Activated CD4-positive, alpha-beta memory T cell treated with anti-CD3 and anti-CD28 coated beads, Interleukin-2, amount 10 ng/mL, durations not matched to agents 7 days and 5 days (primary cell): ENCODE measurements at regions of chr22 and their contacts with region 1.

Region 1: GRCh38 chr22:17217179-17217578 is 2.1 kb downstream of the ADA2 start:
- DNase-seq: peak; percentile 30
- H3K4me3 Mint-ChIP-seq: peak overlapping the region; percentile 65
- H3K27ac Mint-ChIP-seq: peak overlapping the region; percentile 75
- H3K4me1 Mint-ChIP-seq: peaks cover 62% of the 10 kb centered on the region
- H3K27me3 Mint-ChIP-seq: peaks cover 2% of the 10 kb centered on the region

Region 2: DNA sequence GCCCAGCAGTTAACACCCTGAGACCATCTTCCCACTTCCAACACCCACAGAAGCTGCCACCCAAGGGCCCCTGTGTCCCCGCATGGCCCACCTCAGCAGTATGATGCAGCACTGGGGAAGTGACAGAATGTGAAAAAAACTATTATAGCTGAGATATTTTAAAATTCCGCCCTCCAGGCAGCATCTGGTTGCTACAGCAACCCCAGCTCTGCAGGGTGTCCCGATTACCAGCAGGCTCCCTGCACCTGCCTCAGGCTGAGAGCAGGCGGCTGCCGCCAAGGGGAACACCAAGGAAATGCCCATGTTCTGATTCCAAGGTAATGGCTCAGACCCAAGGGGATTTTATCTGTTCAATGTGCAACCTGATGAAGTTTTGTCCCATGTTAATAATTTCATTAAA is 85.5 kb before region 1 on chr22:
- CTCF ChIA-PET with region 1: no interaction called
- POLR2A ChIA-PET with region 1: no interaction called
- DNase-seq: no peak
- H3K4me3 Mint-ChIP-seq: no peak overlapping the region
- H3K27ac Mint-ChIP-seq: no peak overlapping the region
- H3K4me1 Mint-ChIP-seq: no peaks in the 10 kb centered on the region
- H3K27me3 Mint-ChIP-seq: no peaks in the 10 kb centered on the region

Region 3: DNA sequence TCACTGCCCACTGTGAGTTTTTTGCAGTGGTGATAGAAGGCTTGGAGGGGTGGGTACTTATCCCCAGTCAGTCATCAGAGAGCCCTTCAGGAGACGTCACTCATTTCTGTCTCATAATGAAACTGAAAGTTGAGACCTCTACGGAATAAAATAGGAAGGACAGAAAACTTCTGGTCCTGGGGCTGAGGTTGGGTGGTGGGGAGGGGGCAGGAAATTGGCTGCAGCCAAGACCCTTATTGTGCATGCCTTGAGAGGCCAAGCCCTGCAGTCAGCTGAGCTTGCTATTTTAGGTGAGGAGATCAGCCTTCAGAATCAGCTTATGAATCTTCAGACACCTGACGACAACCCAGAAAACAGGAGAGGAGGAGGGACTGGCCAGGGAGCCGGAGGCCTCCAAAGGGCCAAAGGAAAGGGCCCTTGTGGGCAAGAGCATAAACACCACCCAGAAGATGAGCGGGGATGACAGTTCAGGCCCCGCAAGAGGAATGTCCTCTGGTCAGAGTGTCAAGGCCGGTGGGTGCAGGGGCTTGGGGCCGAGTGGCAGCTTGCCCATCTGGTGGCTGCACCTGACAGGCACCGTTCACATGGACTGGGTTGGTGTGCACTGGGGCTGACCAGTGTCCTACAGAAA is 20.0 kb after region 1 on chr22:
- CTCF ChIA-PET with region 1: interaction called, 7 read pairs
- POLR2A ChIA-PET with region 1: interaction called, 15 read pairs
- DNase-seq: peak; percentile 51
- H3K4me3 Mint-ChIP-seq: peak overlapping the region; percentile 70
- H3K27ac Mint-ChIP-seq: peak overlapping the region; percentile 77
- H3K4me1 Mint-ChIP-seq: peaks cover 18% of the 10 kb centered on the region
- H3K27me3 Mint-ChIP-seq: no peaks in the 10 kb centered on the region

Region 4: GRCh38 chr22:17258015-17258787 is 41.0 kb after region 1 on chr22:
- CTCF ChIA-PET with region 1: interaction called, 4 read pairs
- POLR2A ChIA-PET with region 1: interaction called, 12 read pairs
- DNase-seq: peak; percentile 79
- H3K4me3 Mint-ChIP-seq: peak overlapping the region; percentile 24
- H3K27ac Mint-ChIP-seq: peak overlapping the region; percentile 78
- H3K4me1 Mint-ChIP-seq: peaks cover 31% of the 10 kb centered on the region
- H3K27me3 Mint-ChIP-seq: no peaks in the 10 kb centered on the region

Region 5: GRCh38 chr22:17314487-17314886 is 97.3 kb after region 1 on chr22:
- CTCF ChIA-PET with region 1: no interaction called
- POLR2A ChIA-PET with region 1: no interaction called
- DNase-seq: no peak
- H3K4me3 Mint-ChIP-seq: no peak overlapping the region
- H3K27ac Mint-ChIP-seq: no peak overlapping the region
- H3K4me1 Mint-ChIP-seq: no peaks in the 10 kb centered on the region
- H3K27me3 Mint-ChIP-seq: peaks cover 5% of the 10 kb centered on the region